PC-9 (cell line): ENCODE measurements at regions of chr10 and their contacts with region 1.

Region 1: DNA sequence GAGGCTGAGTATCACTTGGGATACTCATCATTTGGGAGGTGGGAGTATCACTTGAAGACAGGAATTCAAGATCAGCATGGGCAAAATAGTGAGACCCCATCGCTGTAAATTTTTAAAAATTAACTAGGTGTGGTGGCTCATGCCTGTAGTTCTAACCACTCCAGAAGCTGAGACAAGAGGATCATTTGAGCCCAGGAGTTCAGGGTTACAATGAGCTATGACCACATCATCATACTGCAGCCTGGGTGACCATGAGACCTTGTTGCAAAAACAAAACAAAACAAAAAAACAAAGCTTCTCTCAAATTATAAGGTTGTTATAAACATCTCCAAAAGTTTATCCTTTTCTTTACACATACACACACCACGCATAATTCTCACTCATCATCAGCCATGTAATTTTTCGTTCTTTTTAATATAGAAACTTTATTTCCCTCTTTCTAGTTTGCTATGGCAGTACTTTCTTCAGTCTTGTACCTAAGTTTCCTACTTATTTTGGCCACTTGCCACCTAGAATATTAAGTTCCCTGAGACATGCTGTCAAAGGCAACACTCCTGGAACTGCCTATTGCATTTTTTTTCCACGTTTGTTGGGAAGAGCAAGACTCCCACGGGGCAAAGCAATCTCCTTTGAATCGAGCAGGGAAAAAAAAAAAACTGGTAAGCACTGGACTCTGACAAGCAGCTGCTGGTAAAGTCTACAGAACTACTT is 37.1 kb downstream of the SKIDA1 start:
- DNase-seq: no peak
- H3K4me3 ChIP-seq: no peak overlapping the region
- H3K27ac ChIP-seq: no peak overlapping the region
- H3K4me1 ChIP-seq: no peaks in the 10 kb centered on the region
- H3K27me3 ChIP-seq: no peaks in the 10 kb centered on the region
- CTCF ChIP-seq: no peak

Region 2: DNA sequence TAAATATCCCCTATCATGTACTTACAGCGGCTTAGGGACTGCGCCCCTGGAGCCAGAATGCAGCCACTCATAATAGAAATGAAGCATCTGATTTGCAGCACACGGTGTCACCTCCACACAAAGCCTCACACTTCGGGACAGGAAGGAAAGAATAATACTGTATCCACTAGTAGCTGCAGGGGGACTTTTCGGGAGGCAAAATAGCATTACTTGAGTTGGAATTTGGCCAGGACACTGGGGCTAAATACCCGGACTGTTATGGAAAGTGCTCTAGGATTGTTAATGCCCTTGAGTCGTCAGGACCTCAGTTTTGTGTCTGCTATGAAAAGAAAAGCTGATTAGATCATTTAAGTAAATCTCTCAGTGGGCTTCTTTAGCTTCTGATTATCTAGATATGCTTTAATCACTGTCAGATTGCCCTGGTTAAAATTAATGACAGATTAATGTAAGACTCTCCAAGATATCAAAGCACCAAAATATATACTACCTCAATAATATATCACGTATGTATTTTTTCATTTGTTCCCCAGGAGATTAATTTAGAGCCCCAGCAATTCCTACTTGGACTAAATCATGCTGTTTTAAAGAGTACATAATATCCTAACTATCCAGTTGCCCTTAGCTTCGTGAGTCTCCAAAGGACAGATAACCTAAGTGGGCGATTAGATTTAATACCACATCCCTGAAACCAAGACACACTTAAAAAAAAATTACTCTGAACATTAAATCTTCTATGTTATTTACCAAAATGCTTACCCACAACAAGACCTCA is 418.3 kb before region 1 on chr10:
- CTCF ChIA-PET with region 1: no interaction called
- POLR2A ChIA-PET with region 1: no interaction called
- intact Hi-C with region 1: no loop called
- DNase-seq: no peak
- H3K4me3 ChIP-seq: no peak overlapping the region
- H3K27ac ChIP-seq: no peak overlapping the region
- H3K4me1 ChIP-seq: no peaks in the 10 kb centered on the region
- H3K27me3 ChIP-seq: no peaks in the 10 kb centered on the region
- CTCF ChIP-seq: no peak

Region 3: DNA sequence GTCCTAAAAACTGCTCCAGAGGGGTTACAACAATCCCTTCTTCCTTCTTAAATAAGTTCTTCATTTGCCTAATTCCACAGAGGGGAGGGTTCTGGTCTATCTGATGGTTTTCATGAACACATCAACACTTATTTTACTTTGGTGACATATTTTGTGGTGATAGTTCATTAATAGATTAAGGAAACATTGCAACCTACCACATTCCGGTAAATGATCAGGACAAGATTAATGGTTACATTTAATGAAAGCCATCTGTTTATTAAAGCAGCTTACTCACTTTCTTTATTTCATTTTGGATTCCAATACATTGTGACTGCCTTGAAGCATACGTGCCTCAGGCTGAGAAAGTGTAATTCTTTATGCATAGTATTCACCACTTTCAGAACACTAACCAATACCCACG is 63.9 kb before region 1 on chr10:
- CTCF ChIA-PET with region 1: no interaction called
- POLR2A ChIA-PET with region 1: no interaction called
- intact Hi-C with region 1: loop called (anchors 2 kb)
- DNase-seq: no peak
- H3K4me3 ChIP-seq: no peak overlapping the region
- H3K27ac ChIP-seq: no peak overlapping the region
- H3K4me1 ChIP-seq: no peaks in the 10 kb centered on the region
- H3K27me3 ChIP-seq: no peaks in the 10 kb centered on the region
- CTCF ChIP-seq: no peak

Region 4: GRCh38 chr10:21807180-21807579 is 318.8 kb after region 1 on chr10:
- CTCF ChIA-PET with region 1: no interaction called
- POLR2A ChIA-PET with region 1: no interaction called
- intact Hi-C with region 1: no loop called
- DNase-seq: no peak
- H3K4me3 ChIP-seq: no peak overlapping the region
- H3K27ac ChIP-seq: no peak overlapping the region
- H3K4me1 ChIP-seq: no peaks in the 10 kb centered on the region
- H3K27me3 ChIP-seq: no peaks in the 10 kb centered on the region
- CTCF ChIP-seq: no peak